H1 (cell line): ENCODE measurements at regions of chr6 and their contacts with region 1.

Region 1: DNA sequence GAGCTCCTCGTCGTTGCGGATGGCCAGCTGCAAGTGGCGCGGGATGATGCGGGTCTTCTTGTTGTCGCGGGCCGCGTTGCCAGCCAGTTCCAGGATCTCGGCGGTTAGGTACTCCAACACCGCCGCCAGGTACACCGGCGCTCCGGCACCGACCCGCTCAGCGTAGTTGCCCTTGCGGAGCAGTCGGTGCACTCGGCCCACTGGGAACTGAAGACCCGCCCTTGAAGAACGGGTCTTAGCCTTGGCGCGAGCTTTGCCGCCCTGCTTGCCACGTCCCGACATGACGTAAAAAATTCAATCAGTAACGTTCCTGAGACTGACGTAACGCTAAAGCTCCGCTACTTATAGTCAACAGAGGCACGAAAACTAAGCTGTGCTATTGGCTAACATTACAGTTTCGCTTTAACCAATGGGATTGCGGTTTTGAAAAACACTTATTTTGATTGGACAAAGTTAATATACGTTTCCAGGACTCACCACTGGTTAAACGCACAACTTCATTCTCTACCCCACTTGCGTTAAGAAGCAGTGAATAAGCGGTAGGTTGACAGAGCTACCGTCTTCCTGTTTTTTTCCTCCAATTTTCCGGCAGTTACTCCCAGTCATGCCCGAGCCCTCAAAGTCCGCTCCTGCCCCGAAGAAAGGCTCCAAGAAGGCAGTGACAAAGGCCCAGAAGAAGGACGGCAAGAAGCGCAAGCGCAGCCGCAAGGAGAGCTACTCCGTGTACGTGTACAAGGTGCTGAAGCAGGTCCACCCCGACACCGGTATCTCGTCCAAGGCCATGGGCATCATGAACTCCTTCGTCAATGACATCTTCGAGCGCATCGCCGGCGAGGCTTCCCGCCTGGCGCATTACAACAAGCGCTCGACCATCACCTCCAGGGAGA is 73.9 kb downstream of the OR2B2 start:
- DNase-seq: peak; percentile 76 to 87
- H3K4me3 ChIP-seq: peak overlapping the region; percentile 77 to 96 (median 93)
- H3K27ac ChIP-seq: peak overlapping the region; percentile 98
- H3K4me1 ChIP-seq: peaks cover 0 to 5% (median 2%) of the 10 kb centered on the region in 4 experiments; a peak in 1 of 7 replicates
- H3K27me3 ChIP-seq: no peaks in the 10 kb centered on the region
- CTCF ChIP-seq: no peak
- EP300 ChIP-seq: no peak
- POLR2A ChIP-seq: peak; percentile 88 to 91
- RAD21 ChIP-seq: no peak

Region 2: GRCh38 chr6:26204332-26205165 is 1633.8 kb before region 1 on chr6:
- CTCF ChIA-PET with region 1: no interaction called
- POLR2A ChIA-PET with region 1: interaction called, 28 read pairs
- DNase-seq: peak; percentile 88 to 97
- H3K4me3 ChIP-seq: peak overlapping the region; percentile 64 to 94 (median 82)
- H3K27ac ChIP-seq: peak overlapping the region; percentile 98
- H3K4me1 ChIP-seq: peaks cover 0 to 15% (median 5%) of the 10 kb centered on the region in 4 experiments; a peak in 6 of 7 replicates
- H3K27me3 ChIP-seq: no peaks in the 10 kb centered on the region
- CTCF ChIP-seq: peak in 1 of 3 experiments; percentile 18; a peak in 1 of 4 replicates
- EP300 ChIP-seq: peak; percentile 13 to 95; a peak in 2 of 3 replicates
- POLR2A ChIP-seq: peak; percentile 99 to 100
- RAD21 ChIP-seq: 0 out of 4 replicates have a peak, but pooled peaks of 1 of the 2 experiments have one; percentile 14

Region 3: DNA sequence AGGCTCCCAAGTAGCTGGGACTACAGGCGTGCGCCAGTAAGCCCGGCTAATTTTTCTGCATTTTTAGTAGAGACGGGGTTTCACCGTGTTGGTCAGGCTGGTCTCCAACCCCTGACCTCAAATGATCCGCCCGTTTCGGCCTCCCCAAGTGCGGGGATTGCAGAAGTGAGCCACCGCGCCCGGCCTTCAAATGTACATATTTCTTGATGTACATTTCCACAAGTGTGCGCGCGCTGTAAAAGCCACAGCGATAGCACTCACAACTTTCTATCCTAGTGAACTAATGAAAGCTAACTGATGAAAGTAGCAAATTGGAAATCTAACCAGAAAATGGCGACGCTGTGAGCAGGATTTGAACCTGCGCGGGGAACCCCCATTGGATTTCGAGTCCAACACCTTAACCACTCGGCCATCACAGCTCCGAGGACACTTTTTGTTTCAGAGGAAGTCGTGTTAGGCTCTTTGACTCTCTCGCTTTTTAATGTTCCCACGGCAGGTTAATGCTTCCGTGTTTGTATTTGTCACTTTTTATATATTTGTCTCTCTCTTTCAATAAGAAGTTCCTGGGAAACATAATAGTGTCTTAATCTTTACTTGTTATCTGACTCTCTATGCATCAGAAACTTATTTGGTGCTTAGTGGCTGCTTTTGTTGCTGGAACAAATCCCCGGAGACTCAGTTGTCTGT is 166.0 kb before region 1 on chr6:
- CTCF ChIA-PET with region 1: no interaction called
- POLR2A ChIA-PET with region 1: no interaction called
- DNase-seq: peak; percentile 86 to 89
- H3K4me3 ChIP-seq: peak overlapping the region; percentile 49 to 79 (median 64)
- H3K27ac ChIP-seq: no peak overlapping the region
- H3K4me1 ChIP-seq: peaks cover 0 to 5% (median under 1%) of the 10 kb centered on the region in 4 experiments; a peak in 3 of 7 replicates
- H3K27me3 ChIP-seq: peaks cover 0 to 22% (median 16%) of the 10 kb centered on the region in 4 experiments; a peak in 5 of 7 replicates
- CTCF ChIP-seq: no peak
- EP300 ChIP-seq: no peak
- POLR2A ChIP-seq: no peak
- RAD21 ChIP-seq: no peak

Region 4: DNA sequence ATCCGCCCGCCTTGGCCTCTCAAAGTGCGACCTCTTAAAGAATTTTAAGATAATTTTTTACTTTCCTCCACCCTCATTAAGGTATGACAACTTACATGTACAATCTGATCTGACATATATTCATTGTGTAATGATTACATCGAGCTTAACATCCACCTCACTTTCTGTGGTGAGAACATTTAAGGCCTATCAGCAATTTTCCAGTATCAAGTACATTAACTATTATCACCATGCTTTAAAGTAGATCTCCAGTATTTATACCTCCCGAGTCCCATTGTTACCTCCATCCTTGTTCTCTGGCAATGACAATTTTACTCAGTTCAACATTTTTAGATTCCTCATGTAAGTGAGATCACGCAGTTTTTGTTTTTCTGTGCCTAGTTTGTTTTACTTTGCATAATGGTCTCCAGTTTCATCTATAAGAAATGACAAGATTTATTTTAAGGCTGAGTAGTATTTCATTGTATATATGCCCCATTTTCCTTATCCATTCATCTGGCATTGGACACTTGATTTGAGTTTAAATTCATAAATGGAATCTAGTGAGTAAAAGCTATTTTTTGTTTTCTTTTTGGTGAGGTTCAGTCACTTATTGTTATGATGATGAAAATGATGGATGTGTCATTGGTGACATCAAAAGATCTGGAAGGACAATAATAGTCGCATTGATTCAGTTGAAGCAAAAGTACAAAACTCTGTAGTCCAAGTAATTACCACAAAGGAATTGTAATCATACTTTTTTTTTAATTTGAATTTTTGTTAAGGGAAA is 13.1 kb before region 1 on chr6:
- CTCF ChIA-PET with region 1: interaction called, 7 read pairs
- POLR2A ChIA-PET with region 1: interaction called, 444 read pairs
- DNase-seq: no peak
- H3K4me3 ChIP-seq: peak overlapping the region; percentile 59 to 90 (median 81)
- H3K27ac ChIP-seq: peak overlapping the region; percentile 95; the same call in 1 of the 2 replicates
- H3K4me1 ChIP-seq: peaks cover 0 to 3% (median 0%) of the 10 kb centered on the region in 4 experiments; a peak in 1 of 7 replicates
- H3K27me3 ChIP-seq: no peaks in the 10 kb centered on the region
- CTCF ChIP-seq: no peak
- EP300 ChIP-seq: no peak
- POLR2A ChIP-seq: peak in 1 of 2 experiments; percentile 32; a peak in 2 of 3 replicates
- RAD21 ChIP-seq: no peak

Region 5: GRCh38 chr6:27879837-27880236 is 41.5 kb after region 1 on chr6:
- CTCF ChIA-PET with region 1: interaction called, 3 read pairs
- POLR2A ChIA-PET with region 1: interaction called, 2,035 read pairs
- DNase-seq: peak in 1 of 2 experiments; percentile 28
- H3K4me3 ChIP-seq: no peak overlapping the region
- H3K27ac ChIP-seq: no peak overlapping the region
- H3K4me1 ChIP-seq: peaks cover 0 to 8% (median 2%) of the 10 kb centered on the region in 4 experiments; a peak in 1 of 7 replicates
- H3K27me3 ChIP-seq: no peaks in the 10 kb centered on the region
- CTCF ChIP-seq: no peak
- EP300 ChIP-seq: no peak
- POLR2A ChIP-seq: no peak
- RAD21 ChIP-seq: no peak